Adrenal gland (tissue), 19 donors: ENCODE measurements at regions of chr12 and their contacts with region 1.

Region 1: DNA sequence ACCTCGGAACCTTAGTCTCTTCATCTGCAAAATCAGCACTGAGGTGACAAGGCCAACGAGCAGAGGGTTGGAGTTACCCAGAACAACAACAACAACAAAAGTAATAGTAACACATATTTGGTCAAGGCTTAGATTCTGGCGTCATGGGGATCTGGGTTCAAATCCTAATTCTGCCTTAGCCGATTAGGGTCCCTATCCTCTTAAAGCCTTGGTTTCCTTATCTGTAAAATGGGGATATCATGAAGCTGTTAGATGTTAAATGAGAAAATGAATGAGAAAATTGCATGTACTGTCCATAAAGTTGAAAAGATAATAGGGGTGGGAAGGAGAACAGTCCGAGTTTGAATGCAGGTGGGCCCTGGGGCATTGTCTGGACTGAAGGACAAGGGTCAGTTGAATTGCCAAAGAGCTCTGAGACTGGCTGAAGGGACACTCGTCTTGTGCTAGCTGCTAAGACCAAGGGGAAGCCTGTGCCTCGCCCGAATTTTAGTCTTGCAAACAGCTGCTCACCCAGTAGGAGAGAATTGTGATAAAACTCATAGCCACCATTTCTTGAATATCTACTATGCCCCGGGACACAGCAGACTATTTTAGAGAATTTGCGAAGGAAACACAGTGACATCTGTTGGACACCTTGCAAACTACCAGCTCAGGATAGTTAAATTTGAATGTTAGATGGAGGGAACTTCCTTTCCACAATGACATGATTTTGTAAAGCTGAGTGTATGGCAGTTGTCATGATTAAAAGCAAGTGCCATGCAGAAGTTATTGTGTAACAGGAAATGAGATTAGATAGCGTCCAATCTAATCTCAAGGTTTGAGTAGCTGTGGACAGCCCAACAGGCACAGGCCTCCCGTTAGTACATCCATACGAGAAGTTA is 6.8 kb upstream of the HNF1A start:
- DNase-seq: peak; percentile 20 to 65 (median 35)
- H3K4me3 ChIP-seq: no peak overlapping the region
- H3K27ac ChIP-seq: no peak overlapping the region
- H3K4me1 ChIP-seq: no peaks in the 10 kb centered on the region
- H3K27me3 ChIP-seq: no peaks in the 10 kb centered on the region
- CTCF ChIP-seq: peak; percentile 49 to 84 (median 78)
- POLR2A ChIP-seq: no peak

Region 2: GRCh38 chr12:120580787-120581723 is 390.5 kb before region 1 on chr12 and contains the start of gene POP5:
- intact Hi-C with region 1: loop called in 1 of 2 experiments (anchors 10 kb)
- DNase-seq: peak; percentile 96 to 99 (median 98)
- H3K4me3 ChIP-seq: peak within 1 kb of the TSS; percentile 30 to 66 (median 56)
- H3K27ac ChIP-seq: peak within 1 kb of the TSS in 4 of 5 donors; percentile 26 to 80 (median 66)
- H3K4me1 ChIP-seq: peaks cover 11 to 26% of the 10 kb centered on the region in 2 donors
- H3K27me3 ChIP-seq: no peaks in the 10 kb centered on the region
- CTCF ChIP-seq: no peak
- POLR2A ChIP-seq: peak; percentile 27 to 84
- total RNA-seq, gene POP5: 31.4 to 92.4 (median 65.0) TPM

Region 3: DNA sequence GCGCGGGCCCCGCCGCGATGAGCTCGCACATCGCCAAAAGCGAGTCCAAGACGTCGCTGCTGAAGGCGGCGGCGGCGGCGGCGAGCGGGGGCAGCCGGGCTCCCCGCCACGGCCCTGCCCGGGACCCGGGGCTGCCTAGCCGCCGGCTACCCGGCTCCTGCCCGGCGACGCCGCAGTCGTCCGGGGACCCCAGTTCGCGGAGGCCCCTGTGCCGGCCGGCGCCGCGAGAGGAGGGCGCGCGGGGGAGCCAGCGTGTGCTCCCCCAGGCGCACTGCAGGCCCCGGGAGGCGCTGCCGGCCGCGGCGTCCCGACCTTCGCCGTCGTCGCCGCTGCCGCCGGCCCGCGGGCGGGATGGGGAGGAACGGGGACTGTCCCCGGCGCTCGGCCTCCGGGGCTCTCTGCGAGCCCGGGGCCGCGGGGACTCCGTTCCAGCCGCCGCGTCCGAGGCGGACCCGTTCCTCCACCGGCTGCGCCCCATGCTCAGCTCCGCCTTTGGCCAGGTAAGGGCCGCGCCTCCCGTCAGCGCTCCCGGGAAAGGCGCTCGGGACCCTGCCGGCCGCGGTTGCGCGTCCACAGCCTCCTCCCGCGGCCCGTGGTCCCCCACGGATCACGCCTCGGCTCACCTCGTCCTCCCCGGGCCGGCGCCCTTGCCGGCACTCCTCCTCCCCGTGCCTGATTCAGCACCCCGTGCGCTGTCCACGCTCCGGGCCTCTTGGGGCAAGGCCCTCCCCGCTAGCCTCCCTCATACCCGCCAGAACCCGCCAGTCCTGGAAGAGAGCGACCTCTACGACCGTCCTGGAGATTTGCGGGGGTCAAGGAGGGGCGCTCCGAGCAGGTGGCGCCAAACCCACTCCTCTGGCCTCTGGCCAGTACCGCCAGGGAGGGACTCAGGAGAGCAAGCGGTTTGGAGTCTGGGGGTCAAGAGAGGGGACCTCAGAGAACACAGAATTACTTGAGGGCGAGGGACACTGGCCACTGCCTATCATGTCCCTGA is 330.4 kb before region 1 on chr12:
- intact Hi-C with region 1: loop called (anchors 10 kb)
- DNase-seq: peak; percentile 63 to 76 (median 70)
- H3K4me3 ChIP-seq: peak overlapping the region in 1 of 4 donors; percentile 57
- H3K27ac ChIP-seq: no peak overlapping the region
- H3K4me1 ChIP-seq: peaks cover 8 to 13% of the 10 kb centered on the region in 2 donors
- H3K27me3 ChIP-seq: peaks cover 11% of the 10 kb centered on the region
- CTCF ChIP-seq: no peak
- POLR2A ChIP-seq: no peak

Region 4: GRCh38 chr12:120759711-120760412 is 211.7 kb before region 1 on chr12:
- intact Hi-C with region 1: loop called in 1 of 2 experiments (anchors 10 kb)
- DNase-seq: peak in 1 of 7 donors; percentile 46
- H3K4me3 ChIP-seq: no peak overlapping the region
- H3K27ac ChIP-seq: no peak overlapping the region
- H3K4me1 ChIP-seq: no peaks in the 10 kb centered on the region
- H3K27me3 ChIP-seq: no peaks in the 10 kb centered on the region
- CTCF ChIP-seq: no peak
- POLR2A ChIP-seq: no peak

Region 5: GRCh38 chr12:120814203-120814902 is 157.2 kb before region 1 on chr12:
- intact Hi-C with region 1: no loop called
- DNase-seq: no peak
- H3K4me3 ChIP-seq: no peak overlapping the region
- H3K27ac ChIP-seq: no peak overlapping the region
- H3K4me1 ChIP-seq: peaks cover 0 to 11% of the 10 kb centered on the region in 2 donors
- H3K27me3 ChIP-seq: no peaks in the 10 kb centered on the region
- CTCF ChIP-seq: no peak
- POLR2A ChIP-seq: no peak

Region 6: GRCh38 chr12:121050725-121051124 is 79.2 kb after region 1 on chr12:
- intact Hi-C with region 1: no loop called
- DNase-seq: no peak
- H3K4me3 ChIP-seq: no peak overlapping the region
- H3K27ac ChIP-seq: no peak overlapping the region
- H3K4me1 ChIP-seq: no peaks in the 10 kb centered on the region
- H3K27me3 ChIP-seq: no peaks in the 10 kb centered on the region
- CTCF ChIP-seq: no peak
- POLR2A ChIP-seq: no peak

Region 7: GRCh38 chr12:121190523-121191031 is 219.0 kb after region 1 on chr12:
- intact Hi-C with region 1: no loop called
- DNase-seq: peak in 1 of 7 donors; percentile 30
- H3K4me3 ChIP-seq: no peak overlapping the region
- H3K27ac ChIP-seq: peak overlapping the region in 2 of 5 donors; percentile 42 to 68
- H3K4me1 ChIP-seq: no peaks in the 10 kb centered on the region
- H3K27me3 ChIP-seq: no peaks in the 10 kb centered on the region
- CTCF ChIP-seq: no peak
- POLR2A ChIP-seq: no peak